Calu3 (cell line): ENCODE measurements at regions of chr12 and their contacts with region 1.

Region 1: GRCh38 chr12:60920841-60921495 is 1325.1 kb downstream of the SLC16A7 start:
- DNase-seq: no peak
- H3K4me3 Mint-ChIP-seq: no peak overlapping the region
- H3K27ac Mint-ChIP-seq: no peak overlapping the region
- H3K4me1 Mint-ChIP-seq: no peaks in the 10 kb centered on the region
- H3K27me3 Mint-ChIP-seq: no peaks in the 10 kb centered on the region
- CTCF ChIP-seq: no peak

Region 2: GRCh38 chr12:60853407-60853806 is 67.6 kb before region 1 on chr12:
- CTCF ChIA-PET with region 1: no interaction called
- intact Hi-C with region 1: no loop called
- DNase-seq: no peak
- H3K4me3 Mint-ChIP-seq: no peak overlapping the region
- H3K27ac Mint-ChIP-seq: no peak overlapping the region
- H3K4me1 Mint-ChIP-seq: peaks cover 8% of the 10 kb centered on the region
- H3K27me3 Mint-ChIP-seq: no peaks in the 10 kb centered on the region
- CTCF ChIP-seq: no peak

Region 3: GRCh38 chr12:60935983-60936761 is 15.2 kb after region 1 on chr12:
- CTCF ChIA-PET with region 1: no interaction called
- intact Hi-C with region 1: loop called (anchors 2 kb)
- DNase-seq: peak; percentile 11
- H3K4me3 Mint-ChIP-seq: no peak overlapping the region
- H3K27ac Mint-ChIP-seq: no peak overlapping the region
- H3K4me1 Mint-ChIP-seq: no peaks in the 10 kb centered on the region
- H3K27me3 Mint-ChIP-seq: no peaks in the 10 kb centered on the region
- CTCF ChIP-seq: no peak